ENCODE measurements at regions of chr14 and their contacts with region 1.

Region 1: GRCh38 chr14:89773644-89774316 is 180.8 kb downstream of the EFCAB11 start:
- DNase-seq: peak in 1 of 2 donors; percentile 43
- ATAC-seq: peak in 4 of 8 donors; percentile 44 to 87 (median 65)
- H3K4me3 ChIP-seq: no peak overlapping the region
- H3K27ac ChIP-seq: no peak overlapping the region
- H3K4me1 ChIP-seq: peaks cover 0 to 27% (median 7%) of the 10 kb centered on the region in 9 donors
- H3K27me3 ChIP-seq: no peaks in the 10 kb centered on the region
- CTCF ChIP-seq: no peak

Region 2: DNA sequence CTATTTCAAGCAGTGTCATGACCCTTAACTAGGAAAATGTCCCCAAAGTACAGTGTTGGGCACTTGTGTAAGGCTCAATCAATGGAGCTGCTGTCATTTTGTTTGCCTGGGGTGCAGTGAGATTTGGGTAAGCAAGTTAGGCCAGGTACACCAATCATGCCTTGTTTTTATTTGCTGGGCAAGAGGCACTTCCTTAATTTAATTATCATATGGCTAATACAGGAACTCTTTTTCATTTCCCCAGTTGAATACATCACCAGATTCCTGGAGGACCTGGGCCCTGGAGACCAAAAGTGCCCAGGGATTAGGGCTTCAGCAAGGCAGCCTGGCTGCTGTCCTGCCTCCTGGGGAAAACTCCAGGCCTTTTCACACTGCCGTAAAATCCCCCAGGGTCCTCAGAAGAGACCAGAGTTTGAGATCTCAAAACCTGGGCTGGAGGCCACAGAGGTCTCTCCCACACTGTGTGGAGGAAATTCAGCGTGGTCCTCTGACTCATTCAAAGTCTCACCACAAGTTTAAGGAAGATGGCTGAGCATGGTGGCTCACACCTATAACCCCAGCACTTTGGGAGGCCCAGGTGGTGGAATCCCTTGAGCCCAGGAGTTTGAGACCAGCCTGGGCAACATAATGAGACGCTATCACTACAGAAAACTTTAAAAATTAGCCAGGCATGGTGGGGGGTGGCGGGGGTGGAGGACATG is 328.4 kb before region 1 on chr14:
- intact Hi-C with region 1: loop called in 1 of 10 experiments (anchors 10 kb)
- DNase-seq: no peak
- ATAC-seq: peak in 4 of 8 donors; percentile 29 to 50 (median 46)
- H3K4me3 ChIP-seq: no peak overlapping the region
- H3K27ac ChIP-seq: peak overlapping the region in 2 of 10 donors; percentile 16 to 39
- H3K4me1 ChIP-seq: peaks cover 0 to 55% (median 22%) of the 10 kb centered on the region in 9 donors
- H3K27me3 ChIP-seq: no peaks in the 10 kb centered on the region
- CTCF ChIP-seq: no peak

Measured in heart right ventricle (tissue), 16 donors.